Psoas muscle (tissue), 8 donors: ENCODE measurements at regions of chr15 and their contacts with region 1.

Region 1: DNA sequence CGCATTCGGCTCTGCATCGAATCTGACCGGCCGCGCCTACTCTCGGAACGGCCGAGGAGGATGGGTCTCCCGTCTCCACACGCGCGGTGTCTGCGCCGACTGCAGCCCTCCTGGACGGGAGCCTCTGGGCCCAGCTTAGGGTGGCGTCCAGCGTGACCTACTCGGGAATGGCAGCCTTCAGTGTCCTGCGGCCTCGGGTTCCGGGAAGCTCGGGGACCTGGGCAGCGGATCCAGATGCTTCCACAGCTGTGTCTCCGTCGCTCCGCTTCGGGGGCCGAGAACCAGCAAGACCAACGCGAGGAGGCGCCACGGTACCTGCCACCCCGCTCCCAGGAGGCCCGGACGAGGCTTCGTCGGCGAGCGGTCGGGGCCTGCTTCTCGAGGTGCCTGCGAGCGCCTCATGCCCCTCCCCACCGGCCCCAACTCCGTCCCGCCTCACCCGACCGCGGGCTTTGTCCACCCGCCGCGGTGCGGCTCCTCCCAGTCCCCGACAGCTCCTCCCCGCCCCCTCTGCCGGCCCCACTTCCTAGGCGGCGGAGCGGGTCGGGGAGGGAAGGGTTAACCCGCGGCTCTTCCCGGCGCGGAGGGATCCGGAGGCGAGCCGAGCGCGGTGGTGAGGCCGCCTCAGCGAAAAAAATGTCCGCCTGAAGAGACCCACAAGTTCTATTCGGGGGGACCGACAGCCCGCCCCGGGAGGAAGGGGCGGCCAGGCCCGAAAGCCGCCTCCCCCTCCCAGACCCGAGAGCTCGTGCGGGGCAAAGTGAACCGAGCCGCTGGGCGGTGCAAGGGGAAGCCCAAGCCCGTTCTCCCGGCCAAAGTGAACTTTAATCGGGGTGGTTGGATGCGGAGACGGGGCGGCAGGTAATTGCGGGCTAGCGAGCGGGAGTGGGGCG is at the start of gene TCF12:
- DNase-seq: peak; percentile 96 to 97
- ATAC-seq: peak; percentile 92 to 95 (median 94)
- H3K4me3 ChIP-seq: peak within 1 kb of the TSS; percentile 93
- H3K27ac ChIP-seq: peak within 1 kb of the TSS; percentile 90
- H3K4me1 ChIP-seq: peaks cover 25% of the 10 kb centered on the region
- H3K27me3 ChIP-seq: no peaks in the 10 kb centered on the region
- CTCF ChIP-seq: peak; percentile 37
- total RNA-seq, gene TCF12: 30.5 to 53.1 (median 44.8) TPM

Region 2: DNA sequence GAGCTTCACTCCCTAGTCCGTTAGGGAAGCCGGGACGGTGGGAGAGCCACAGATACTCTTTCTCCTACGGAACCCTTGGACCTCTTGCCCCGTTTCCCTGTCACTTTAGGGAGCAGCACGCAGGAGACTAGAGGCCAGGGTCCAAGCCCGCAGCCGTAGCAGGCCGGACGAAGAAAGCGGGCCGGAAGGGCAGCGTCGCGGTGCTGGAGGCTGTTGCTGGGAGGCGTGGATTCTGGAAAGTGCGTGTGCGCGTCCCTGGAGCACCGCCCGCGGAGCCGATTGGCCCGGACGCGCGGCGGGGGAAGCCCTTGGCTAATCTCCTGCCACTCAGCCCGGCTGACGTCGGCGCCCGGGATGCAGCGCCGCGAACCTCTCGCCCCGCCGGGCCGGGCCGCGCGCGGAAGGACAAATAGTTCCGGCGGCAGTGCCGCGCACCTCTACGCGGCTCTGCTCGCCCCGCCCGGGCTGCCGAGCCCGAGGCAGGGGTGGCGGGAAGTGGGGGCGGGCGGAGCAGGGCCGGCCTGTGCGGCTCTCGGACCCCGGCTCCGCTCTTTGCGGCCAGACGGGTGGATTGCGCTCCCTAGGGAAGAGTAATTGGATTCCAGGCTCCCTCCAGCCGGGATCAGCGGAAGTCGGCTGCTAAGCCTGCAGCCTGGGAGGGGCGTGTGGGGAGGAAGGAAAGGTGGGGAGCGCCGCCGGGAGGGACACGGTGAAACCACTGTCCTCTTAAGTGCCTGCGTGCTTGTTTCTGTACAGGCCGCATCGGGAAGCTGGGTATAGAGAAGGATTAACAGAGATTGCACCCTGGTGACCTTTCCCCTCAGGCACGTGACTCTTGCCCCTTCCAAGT is 31.1 kb before region 1 on chr15:
- intact Hi-C with region 1: loop called (anchors 1 kb)
- DNase-seq: peak; percentile 95 to 98
- ATAC-seq: peak; percentile 97 to 98 (median 98)
- H3K4me3 ChIP-seq: peak overlapping the region; percentile 84
- H3K27ac ChIP-seq: peak overlapping the region; percentile 98
- H3K4me1 ChIP-seq: peaks cover 18% of the 10 kb centered on the region
- H3K27me3 ChIP-seq: no peaks in the 10 kb centered on the region
- CTCF ChIP-seq: no peak

Region 3: DNA sequence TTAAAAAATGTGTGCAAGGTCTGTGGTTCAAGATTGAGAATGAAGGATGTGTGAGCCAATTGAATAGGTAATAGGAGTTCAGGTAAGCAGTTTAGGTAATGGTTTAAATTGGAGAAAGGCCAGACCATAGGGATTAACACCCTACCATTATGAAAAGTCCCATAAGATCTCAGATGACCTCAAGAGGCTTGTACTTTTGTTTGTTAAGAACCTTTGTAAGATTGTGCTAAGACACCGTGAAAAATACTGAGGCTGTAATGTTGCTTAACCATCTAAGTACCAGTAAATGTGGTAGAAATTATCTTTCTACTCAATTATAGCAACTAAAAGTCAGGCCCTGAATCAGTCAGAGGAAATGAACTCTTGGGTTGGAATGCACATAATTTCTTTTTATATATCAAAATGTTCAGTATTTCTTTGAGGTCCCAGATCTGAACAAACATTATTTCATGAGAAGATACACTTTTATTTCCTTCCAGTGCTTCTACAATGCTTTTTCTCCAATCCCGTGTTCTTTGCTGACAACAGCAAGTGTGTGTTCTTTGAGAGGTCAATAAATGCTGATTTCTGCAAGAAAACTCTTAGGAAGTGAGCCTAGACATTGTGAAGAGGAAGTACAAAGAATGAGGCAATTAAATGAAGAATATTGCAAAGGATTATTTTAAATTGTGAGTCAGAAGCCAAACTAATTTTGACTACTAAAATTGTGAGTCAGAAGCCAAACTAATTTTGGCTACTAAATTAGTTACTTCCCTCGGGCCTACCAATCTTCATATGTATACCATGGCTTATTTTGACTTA is 66.6 kb after region 1 on chr15:
- intact Hi-C with region 1: loop called in 1 of 2 experiments (anchors 10 kb)
- DNase-seq: no peak
- ATAC-seq: peak in 2 of 4 donors; percentile 23 to 44
- H3K4me3 ChIP-seq: no peak overlapping the region
- H3K27ac ChIP-seq: no peak overlapping the region
- H3K4me1 ChIP-seq: peaks cover 79% of the 10 kb centered on the region
- H3K27me3 ChIP-seq: no peaks in the 10 kb centered on the region
- CTCF ChIP-seq: no peak

Region 4: GRCh38 chr15:57100136-57100539 is 181.8 kb after region 1 on chr15:
- intact Hi-C with region 1: no loop called
- DNase-seq: no peak
- ATAC-seq: no peak
- H3K4me3 ChIP-seq: no peak overlapping the region
- H3K27ac ChIP-seq: no peak overlapping the region
- H3K4me1 ChIP-seq: no peaks in the 10 kb centered on the region
- H3K27me3 ChIP-seq: no peaks in the 10 kb centered on the region
- CTCF ChIP-seq: no peak

Region 5: GRCh38 chr15:57118013-57118799 is 199.9 kb after region 1 on chr15:
- intact Hi-C with region 1: loop called in 1 of 2 experiments (anchors 10 kb)
- DNase-seq: no peak
- ATAC-seq: peak; percentile 54 to 89 (median 76)
- H3K4me3 ChIP-seq: no peak overlapping the region
- H3K27ac ChIP-seq: no peak overlapping the region
- H3K4me1 ChIP-seq: peaks cover 24% of the 10 kb centered on the region
- H3K27me3 ChIP-seq: no peaks in the 10 kb centered on the region
- CTCF ChIP-seq: no peak

Region 6: DNA sequence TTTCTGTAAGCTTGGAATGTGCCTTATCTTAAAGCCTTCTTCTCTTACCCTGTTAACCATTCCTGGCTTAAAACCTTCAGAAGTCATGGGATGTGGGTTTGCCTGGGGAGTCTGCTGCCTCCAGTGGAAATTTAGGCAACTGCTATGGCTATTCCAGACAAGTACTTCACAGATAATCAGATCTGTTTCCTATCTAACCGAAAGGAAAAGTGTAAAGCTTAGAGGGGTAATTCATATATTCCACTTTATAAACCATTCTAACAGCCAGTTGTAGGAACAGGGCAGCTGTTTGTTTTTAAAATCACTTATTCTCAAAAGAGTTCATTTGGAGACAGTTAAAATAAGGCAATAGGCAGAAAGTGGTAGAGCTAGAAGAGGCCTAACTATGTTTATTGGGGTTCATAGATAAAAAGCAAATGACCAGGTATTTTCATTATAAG is 220.1 kb after region 1 on chr15:
- intact Hi-C with region 1: loop called in 1 of 2 experiments (anchors 10 kb)
- DNase-seq: no peak
- ATAC-seq: peak; percentile 58 to 87 (median 81)
- H3K4me3 ChIP-seq: no peak overlapping the region
- H3K27ac ChIP-seq: no peak overlapping the region
- H3K4me1 ChIP-seq: peaks cover 7% of the 10 kb centered on the region
- H3K27me3 ChIP-seq: no peaks in the 10 kb centered on the region
- CTCF ChIP-seq: peak; percentile 71

Region 7: GRCh38 chr15:57213862-57214261 is 295.6 kb after region 1 on chr15:
- intact Hi-C with region 1: loop called (anchors 5 to 10 kb)
- DNase-seq: no peak
- ATAC-seq: peak in 3 of 4 donors; percentile 47 to 77 (median 59)
- H3K4me3 ChIP-seq: no peak overlapping the region
- H3K27ac ChIP-seq: no peak overlapping the region
- H3K4me1 ChIP-seq: peaks cover 24% of the 10 kb centered on the region
- H3K27me3 ChIP-seq: no peaks in the 10 kb centered on the region
- CTCF ChIP-seq: peak; percentile 54

Region 8: GRCh38 chr15:57306161-57306943 is 388.1 kb after region 1 on chr15:
- intact Hi-C with region 1: loop called in 1 of 2 experiments (anchors 10 kb)
- DNase-seq: peak; percentile 87 to 94
- ATAC-seq: peak; percentile 86 to 97 (median 90)
- H3K4me3 ChIP-seq: peak overlapping the region; percentile 78
- H3K27ac ChIP-seq: no peak overlapping the region
- H3K4me1 ChIP-seq: peaks cover 5% of the 10 kb centered on the region
- H3K27me3 ChIP-seq: no peaks in the 10 kb centered on the region
- CTCF ChIP-seq: peak; percentile 90